HCT116 (cell line): ENCODE measurements at regions of chr4 and their contacts with region 1.

Region 1: GRCh38 chr4:186472948-186473347 is 82.4 kb downstream of the MTNR1A start:
- DNase-seq: peak; percentile 41
- ATAC-seq: peak; percentile 78
- H3K4me3 ChIP-seq: no peak overlapping the region
- H3K27ac ChIP-seq: no peak overlapping the region
- H3K4me1 ChIP-seq: peaks cover 0 to 3% of the 10 kb centered on the region in 2 experiments; a peak in 1 of 4 replicates
- H3K27me3 ChIP-seq: no peaks in the 10 kb centered on the region
- CTCF ChIP-seq: peak; percentile 63 to 74 (median 69)
- POLR2A ChIP-seq: no peak
- RAD21 ChIP-seq: peak; percentile 77

Region 2: GRCh38 chr4:186587416-186588018 is 114.6 kb after region 1 on chr4:
- CTCF ChIA-PET with region 1: no interaction called
- POLR2A ChIA-PET with region 1: no interaction called
- RAD21 ChIA-PET with region 1: no interaction called
- intact Hi-C with region 1: loop called (anchors 1 kb)
- DNase-seq: peak; percentile 21
- ATAC-seq: peak; percentile 69
- H3K4me3 ChIP-seq: no peak overlapping the region
- H3K27ac ChIP-seq: no peak overlapping the region
- H3K4me1 ChIP-seq: no peaks in the 10 kb centered on the region
- H3K27me3 ChIP-seq: no peaks in the 10 kb centered on the region
- CTCF ChIP-seq: peak; percentile 52 to 81 (median 74)
- POLR2A ChIP-seq: no peak
- RAD21 ChIP-seq: peak; percentile 57

Region 3: DNA sequence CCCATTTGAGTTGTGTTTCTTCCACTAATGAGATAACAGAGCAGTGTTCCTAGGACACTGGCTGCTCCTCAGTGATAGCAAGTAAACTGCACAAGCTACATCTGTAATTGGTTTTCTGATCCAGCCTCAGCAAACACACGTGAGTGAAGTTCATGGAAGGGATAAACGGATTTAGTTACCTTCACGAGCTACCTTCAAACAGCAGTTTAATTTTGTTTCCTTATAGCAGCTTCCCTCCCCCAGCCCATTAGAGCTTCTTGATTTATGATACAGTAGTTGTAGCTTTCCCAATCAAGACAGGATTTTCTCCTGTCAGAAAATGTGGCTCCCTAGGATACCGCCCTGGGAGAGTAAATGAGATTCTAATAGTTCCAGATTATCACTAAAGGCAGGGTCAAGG is 884.9 kb after region 1 on chr4:
- CTCF ChIA-PET with region 1: no interaction called
- POLR2A ChIA-PET with region 1: no interaction called
- RAD21 ChIA-PET with region 1: no interaction called
- intact Hi-C with region 1: no loop called
- DNase-seq: no peak
- ATAC-seq: no peak
- H3K4me3 ChIP-seq: no peak overlapping the region
- H3K27ac ChIP-seq: no peak overlapping the region
- H3K4me1 ChIP-seq: no peaks in the 10 kb centered on the region
- H3K27me3 ChIP-seq: no peaks in the 10 kb centered on the region
- CTCF ChIP-seq: no peak
- POLR2A ChIP-seq: no peak
- RAD21 ChIP-seq: no peak

Region 4: GRCh38 chr4:187687697-187688096 is 1214.7 kb after region 1 on chr4:
- CTCF ChIA-PET with region 1: no interaction called
- POLR2A ChIA-PET with region 1: no interaction called
- RAD21 ChIA-PET with region 1: no interaction called
- intact Hi-C with region 1: no loop called
- DNase-seq: no peak
- ATAC-seq: no peak
- H3K4me3 ChIP-seq: no peak overlapping the region
- H3K27ac ChIP-seq: no peak overlapping the region
- H3K4me1 ChIP-seq: peaks cover 0 to 6% of the 10 kb centered on the region in 2 experiments; a peak in 1 of 4 replicates
- H3K27me3 ChIP-seq: no peaks in the 10 kb centered on the region
- CTCF ChIP-seq: no peak
- POLR2A ChIP-seq: no peak
- RAD21 ChIP-seq: no peak